CD4-positive, alpha-beta memory T cell (primary cell): ENCODE measurements at regions of chr6 and their contacts with region 1.

Region 1: DNA sequence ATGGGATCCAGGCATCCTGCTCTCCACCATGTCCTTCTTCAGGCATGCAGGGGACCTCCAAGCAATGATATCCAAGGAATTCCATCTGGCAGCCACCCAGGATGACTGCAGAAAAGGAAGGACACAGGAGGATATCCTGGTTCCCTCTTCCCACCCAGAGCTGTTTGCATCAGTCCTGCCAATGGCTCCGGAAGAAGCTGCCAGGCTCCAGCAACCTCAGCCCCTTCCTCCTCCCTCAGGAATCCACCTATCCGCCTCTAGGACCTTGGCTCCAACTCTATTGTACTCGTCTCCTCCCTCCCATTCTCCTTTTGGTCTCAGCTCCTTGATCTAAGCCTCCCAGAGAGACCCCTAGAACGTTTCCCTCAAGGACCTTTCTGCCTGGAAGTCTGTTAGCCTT is 733 bp upstream of the PSORS1C2 start:
- DNase-seq: no peak
- H3K4me3 ChIP-seq: no peak overlapping the region
- H3K4me3 Mint-ChIP-seq: no peak overlapping the region
- H3K27ac ChIP-seq: no peak overlapping the region
- H3K27ac Mint-ChIP-seq: peak overlapping the region in 2 of 7 donors; percentile 32 to 63
- H3K4me1 ChIP-seq: peaks cover 5% of the 10 kb centered on the region
- H3K4me1 Mint-ChIP-seq: peaks cover 3 to 11% (median 5%) of the 10 kb centered on the region in 4 donors
- H3K27me3 ChIP-seq: no peaks in the 10 kb centered on the region
- H3K27me3 Mint-ChIP-seq: peaks cover 0 to 2% of the 10 kb centered on the region in 2 donors

Region 2: DNA sequence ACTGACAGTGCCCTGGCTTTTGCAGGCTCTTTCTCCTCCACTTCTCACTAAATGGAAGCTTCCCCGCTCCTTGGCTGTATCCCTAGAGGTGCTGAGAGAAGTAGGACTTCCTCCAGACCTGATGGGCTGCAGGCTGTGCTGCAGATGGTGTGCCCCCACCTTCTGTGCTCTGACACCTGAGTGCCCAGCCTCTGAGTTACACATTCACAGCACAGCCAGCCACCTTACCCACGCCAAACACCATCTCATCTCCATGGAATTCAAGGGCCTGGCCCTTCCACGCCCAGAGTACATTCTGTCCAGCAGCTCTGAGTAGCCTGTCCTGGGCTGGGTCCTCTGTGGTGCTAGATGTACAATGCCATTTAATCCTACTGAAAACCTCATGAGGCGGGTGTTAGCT is 213.0 kb before region 1 on chr6:
- CTCF ChIA-PET with region 1: no interaction called
- POLR2A ChIA-PET with region 1: no interaction called
- intact Hi-C with region 1: no loop called
- DNase-seq: no peak
- H3K4me3 ChIP-seq: no peak overlapping the region
- H3K4me3 Mint-ChIP-seq: no peak overlapping the region
- H3K27ac ChIP-seq: no peak overlapping the region
- H3K27ac Mint-ChIP-seq: peak overlapping the region in 1 of 7 donors; percentile 6
- H3K4me1 ChIP-seq: no peaks in the 10 kb centered on the region
- H3K4me1 Mint-ChIP-seq: no peaks in the 10 kb centered on the region
- H3K27me3 ChIP-seq: no peaks in the 10 kb centered on the region
- H3K27me3 Mint-ChIP-seq: no peaks in the 10 kb centered on the region

Region 3: DNA sequence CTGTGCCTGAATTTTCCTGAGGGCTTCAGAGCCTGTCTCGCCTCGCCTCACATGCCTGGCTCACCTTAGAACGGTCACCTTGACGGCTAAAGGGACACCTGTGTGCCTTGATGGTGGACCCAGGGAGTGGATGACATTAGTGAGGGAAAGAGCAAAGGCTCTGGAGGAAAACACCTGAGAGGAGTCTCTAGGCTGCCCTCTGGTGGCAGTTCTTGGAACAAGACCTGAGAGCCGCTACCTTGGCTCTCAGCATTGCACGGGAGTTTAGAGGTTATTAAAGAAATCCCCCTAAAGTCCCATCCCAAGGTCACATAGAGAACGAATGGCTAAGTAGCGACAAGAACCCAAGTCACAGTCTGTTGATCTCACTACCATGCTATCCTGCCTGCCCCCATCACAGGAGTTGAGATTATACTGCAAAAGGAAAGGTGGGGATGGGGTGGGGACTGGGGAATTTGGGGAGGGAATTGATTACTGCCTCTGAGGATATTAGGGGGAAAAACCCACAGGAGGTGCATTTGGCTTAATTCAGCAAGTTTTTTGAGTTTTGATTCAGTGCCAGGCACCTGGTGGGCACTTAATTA is 11.4 kb before region 1 on chr6:
- CTCF ChIA-PET with region 1: interaction called, 10 read pairs
- POLR2A ChIA-PET with region 1: no interaction called
- intact Hi-C with region 1: no loop called
- DNase-seq: peak; percentile 57 to 70 (median 62)
- H3K4me3 ChIP-seq: no peak overlapping the region
- H3K4me3 Mint-ChIP-seq: no peak overlapping the region
- H3K27ac ChIP-seq: no peak overlapping the region
- H3K27ac Mint-ChIP-seq: peak overlapping the region in 3 of 7 donors; percentile 7 to 52 (median 24)
- H3K4me1 ChIP-seq: peaks cover 3% of the 10 kb centered on the region
- H3K4me1 Mint-ChIP-seq: peaks cover 2 to 8% (median 7%) of the 10 kb centered on the region in 4 donors
- H3K27me3 ChIP-seq: no peaks in the 10 kb centered on the region
- H3K27me3 Mint-ChIP-seq: peaks cover 3 to 6% of the 10 kb centered on the region in 2 donors

Region 4: DNA sequence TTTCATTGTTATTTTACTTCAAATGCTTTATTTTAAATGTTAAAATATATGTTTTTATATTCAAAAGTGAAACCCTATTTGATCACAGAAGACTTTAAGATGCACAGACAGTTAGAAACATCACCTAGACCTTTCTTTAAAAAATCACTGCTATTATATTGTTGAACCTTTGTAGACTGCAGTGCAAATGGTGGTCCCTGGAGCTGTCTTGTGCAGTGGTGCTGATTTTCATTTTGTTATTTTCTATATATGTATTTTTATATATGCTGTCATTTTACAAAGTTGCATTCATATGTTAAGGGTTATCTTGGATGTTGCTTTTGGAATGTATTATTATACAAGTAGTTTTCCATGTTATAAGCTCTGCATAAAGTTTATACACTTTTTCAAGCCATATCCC is 236.1 kb after region 1 on chr6:
- CTCF ChIA-PET with region 1: interaction called, 3 read pairs
- POLR2A ChIA-PET with region 1: no interaction called
- intact Hi-C with region 1: loop called (anchors 2 kb)
- DNase-seq: no peak
- H3K4me3 ChIP-seq: no peak overlapping the region
- H3K4me3 Mint-ChIP-seq: no peak overlapping the region
- H3K27ac ChIP-seq: no peak overlapping the region
- H3K27ac Mint-ChIP-seq: no peak overlapping the region
- H3K4me1 ChIP-seq: no peaks in the 10 kb centered on the region
- H3K4me1 Mint-ChIP-seq: no peaks in the 10 kb centered on the region
- H3K27me3 ChIP-seq: peaks cover 7% of the 10 kb centered on the region
- H3K27me3 Mint-ChIP-seq: peaks cover 16 to 18% of the 10 kb centered on the region in 2 donors

Region 5: GRCh38 chr6:31383149-31383548 is 243.6 kb after region 1 on chr6:
- CTCF ChIA-PET with region 1: no interaction called
- POLR2A ChIA-PET with region 1: no interaction called
- intact Hi-C with region 1: loop called (anchors 5 kb)
- DNase-seq: no peak
- H3K4me3 ChIP-seq: no peak overlapping the region
- H3K4me3 Mint-ChIP-seq: no peak overlapping the region
- H3K27ac ChIP-seq: no peak overlapping the region
- H3K27ac Mint-ChIP-seq: no peak overlapping the region
- H3K4me1 ChIP-seq: no peaks in the 10 kb centered on the region
- H3K4me1 Mint-ChIP-seq: no peaks in the 10 kb centered on the region
- H3K27me3 ChIP-seq: peaks cover 7% of the 10 kb centered on the region
- H3K27me3 Mint-ChIP-seq: peaks cover 7 to 8% of the 10 kb centered on the region in 2 donors